Dorsolateral prefrontal cortex (tissue), 120 donors: ENCODE measurements at regions of chr5 and their contacts with region 1.

Region 1: DNA sequence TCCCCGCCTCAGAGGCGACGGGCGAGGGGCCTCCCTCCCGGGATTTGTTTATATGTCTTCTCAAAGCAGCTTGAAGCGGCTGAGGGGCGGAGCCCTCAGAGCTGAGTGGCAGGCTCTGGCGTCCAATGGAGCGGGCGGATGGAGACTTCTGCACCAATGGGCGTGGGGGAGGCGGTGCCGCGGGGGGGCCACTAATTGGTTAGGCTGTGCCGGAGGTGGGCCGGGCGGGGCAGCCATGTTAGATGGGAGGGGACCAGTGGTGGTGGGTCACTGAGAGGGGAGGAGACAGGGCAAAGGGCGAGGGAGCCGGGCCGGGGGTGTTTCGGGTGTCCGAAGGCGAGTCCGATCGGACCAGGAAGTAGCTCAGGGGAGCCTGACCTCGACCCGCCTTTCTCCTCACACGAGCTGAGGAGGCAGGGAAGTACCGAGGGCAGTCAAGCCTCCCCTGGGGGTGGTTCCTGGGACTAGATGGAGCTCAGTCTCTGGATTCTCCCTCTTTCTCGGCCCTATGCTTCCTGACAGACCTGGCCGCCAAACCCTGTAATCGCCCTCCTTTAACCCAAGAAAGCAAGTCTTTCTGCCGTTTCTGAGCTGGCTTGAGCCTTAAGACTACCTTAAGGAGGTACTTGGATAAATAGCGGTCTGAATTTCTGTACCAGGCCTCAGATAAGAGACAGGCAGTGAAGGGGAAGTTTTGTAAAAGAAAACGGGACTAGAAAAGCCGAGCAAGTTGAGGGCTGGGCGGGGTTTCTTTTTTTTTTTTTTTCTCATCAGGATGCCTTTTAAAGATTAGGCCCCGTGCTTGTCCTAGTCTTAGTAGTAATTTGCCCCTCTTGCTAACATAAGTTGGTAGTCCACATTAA is 1.1 kb downstream of the CREBRF start:
- DNase-seq: peak; percentile 97 to 99 (median 98)
- H3K4me3 ChIP-seq: peak overlapping the region; percentile 73 to 100 (median 95)
- H3K27ac ChIP-seq: peak overlapping the region; percentile 93 to 100 (median 99)
- H3K27me3 ChIP-seq: no peaks in the 10 kb centered on the region
- CTCF ChIP-seq: peak in 25 of 56 donors; percentile 7 to 42 (median 18)

Region 2: GRCh38 chr5:172984243-172984953 is 72.9 kb before region 1 on chr5:
- intact Hi-C with region 1: loop called (anchors 1 to 5 kb)
- DNase-seq: peak in 9 of 10 donors; percentile 10 to 71 (median 57)
- H3K4me3 ChIP-seq: peak overlapping the region; percentile 59 to 100 (median 93)
- H3K27ac ChIP-seq: peak overlapping the region; percentile 67 to 97 (median 91)
- H3K27me3 ChIP-seq: no peaks in the 10 kb centered on the region
- CTCF ChIP-seq: peak in 34 of 56 donors; percentile 11 to 49 (median 25)

Region 3: GRCh38 chr5:173016621-173017047 is 40.7 kb before region 1 on chr5:
- intact Hi-C with region 1: loop called in 1 of 2 experiments (anchors 5 kb)
- DNase-seq: peak in 1 of 10 donors; percentile 32
- H3K4me3 ChIP-seq: peak overlapping the region in 28 of 59 donors; percentile 0 to 41 (median 15)
- H3K27ac ChIP-seq: peak overlapping the region in 56 of 59 donors; percentile 0 to 95 (median 80)
- H3K27me3 ChIP-seq: no peaks in the 10 kb centered on the region
- CTCF ChIP-seq: peak in 1 of 56 donors; percentile 27

Region 4: DNA sequence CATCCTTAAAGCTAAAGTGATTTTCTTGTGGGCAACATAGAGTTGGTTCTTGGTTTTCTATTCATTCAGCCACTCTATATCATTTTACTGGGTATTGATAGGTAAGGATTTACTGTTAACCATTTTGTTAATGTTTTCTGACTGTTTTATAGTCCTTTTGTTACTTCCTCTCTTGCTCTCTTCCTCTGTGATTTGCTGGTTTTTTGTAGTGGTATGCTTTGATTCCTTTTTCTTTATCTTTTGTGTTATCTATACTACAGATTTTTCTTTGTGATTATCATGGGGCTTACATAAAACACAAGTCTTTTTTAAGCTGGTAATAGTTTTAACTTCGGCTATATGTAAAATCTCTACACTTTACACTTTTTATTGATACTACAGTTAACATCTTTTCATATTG is 42.2 kb after region 1 on chr5:
- intact Hi-C with region 1: loop called in 1 of 2 experiments (anchors 5 kb)
- DNase-seq: no peak
- H3K4me3 ChIP-seq: no peak overlapping the region
- H3K27ac ChIP-seq: peak overlapping the region in 8 of 59 donors; percentile 2 to 44 (median 20)
- H3K27me3 ChIP-seq: no peaks in the 10 kb centered on the region
- CTCF ChIP-seq: no peak